ENCODE measurements at regions of chr11 and their contacts with region 1.

Region 1: GRCh38 chr11:65111744-65112414 is at the start of gene TM7SF2:
- DNase-seq: peak; percentile 99
- ATAC-seq: peak; percentile 92
- total RNA-seq, gene TM7SF2: 53.1 TPM

Region 2: DNA sequence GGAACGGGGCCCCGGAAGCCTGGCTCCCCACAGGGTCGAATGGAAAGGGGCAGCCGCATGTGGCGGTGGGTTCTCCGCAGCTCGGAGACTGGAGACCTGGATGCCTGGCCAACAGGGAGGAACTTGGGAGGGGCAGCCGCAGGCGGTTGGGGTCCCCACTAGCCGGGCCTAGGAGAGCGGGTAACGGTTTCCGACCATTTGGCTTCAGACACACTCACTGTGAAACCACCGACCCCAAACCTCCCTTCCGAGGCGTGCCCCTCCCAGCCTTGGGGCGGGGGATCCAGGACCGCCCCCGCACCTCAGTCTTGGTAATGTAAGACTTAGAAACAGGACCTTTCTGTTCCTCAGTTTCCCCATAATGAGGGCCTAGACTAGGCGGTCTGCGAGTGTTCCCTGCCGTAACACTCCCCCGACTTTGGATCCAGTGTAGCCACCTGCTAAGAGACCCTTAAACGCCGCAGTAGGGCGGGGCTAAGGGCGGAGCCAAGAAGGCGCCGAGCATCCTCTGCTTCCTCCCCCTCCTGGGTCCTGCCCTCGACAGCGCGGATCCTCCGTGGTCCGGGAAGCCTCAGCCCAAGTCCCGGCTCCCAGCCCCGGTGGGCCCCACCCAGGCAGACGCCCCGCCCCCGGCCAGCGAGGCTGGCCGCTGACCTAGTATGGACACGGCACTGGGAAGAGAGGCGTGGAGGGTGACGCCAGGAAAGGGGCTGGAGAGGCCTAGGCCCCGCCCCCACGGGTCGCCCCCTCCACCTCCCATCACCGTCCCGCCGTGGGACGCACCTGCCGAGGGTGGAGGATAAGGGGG is 366.2 kb before region 1 on chr11:
- intact Hi-C with region 1: no loop called
- DNase-seq: peak; percentile 96
- ATAC-seq: peak; percentile 68

Region 3: GRCh38 chr11:65261591-65262380 is 149.9 kb after region 1 on chr11 and contains the start of gene POLA2:
- intact Hi-C with region 1: loop called (anchors 5 kb)
- DNase-seq: peak; percentile 97
- ATAC-seq: peak; percentile 97
- total RNA-seq, gene POLA2: 2.9 TPM

Measured in Right ventricle myocardium inferior (tissue), 1 donor.